IMR-90 (cell line): ENCODE measurements at regions of chr7 and their contacts with region 1.

Region 1: DNA sequence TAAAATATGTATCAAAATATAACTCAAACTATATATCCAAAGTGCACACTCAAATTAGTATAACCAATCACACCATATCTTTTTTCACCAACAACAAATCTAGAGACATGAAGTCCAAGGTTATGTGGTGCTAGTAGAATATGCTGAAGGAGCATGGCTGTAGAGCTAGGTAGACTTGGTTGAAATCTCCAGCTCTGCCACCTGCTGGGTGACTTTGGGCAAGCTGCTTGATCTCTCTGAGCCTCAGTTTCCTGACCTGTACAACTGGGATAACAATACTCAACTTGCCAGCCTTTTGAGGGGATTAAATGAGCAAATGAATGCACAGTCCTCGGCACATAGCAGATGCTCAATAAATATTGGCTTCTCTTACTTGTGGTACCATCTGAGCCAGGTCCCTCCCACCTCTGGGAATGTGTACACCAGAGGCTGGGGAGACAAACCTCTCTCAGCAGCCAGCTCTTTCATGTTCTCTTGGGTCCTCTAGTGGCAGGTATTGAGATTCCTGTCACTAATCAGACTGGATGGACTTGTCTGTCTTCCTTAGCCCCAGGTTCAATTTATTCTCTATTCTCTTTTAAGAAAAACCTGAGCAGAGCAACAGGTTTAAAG is 94.2 kb upstream of the PDE1C start:
- DNase-seq: peak; percentile 76
- ATAC-seq: peak; percentile 58
- H3K4me3 ChIP-seq: no peak overlapping the region
- H3K27ac ChIP-seq: peak overlapping the region; percentile 62
- H3K4me1 ChIP-seq: peaks cover 11% of the 10 kb centered on the region
- H3K27me3 ChIP-seq: no peaks in the 10 kb centered on the region
- CTCF ChIP-seq: peak; percentile 61
- POLR2A ChIP-seq: no peak
- RAD21 ChIP-seq: peak; percentile 71

Region 2: GRCh38 chr7:31744294-31744874 is 420.1 kb before region 1 on chr7:
- CTCF ChIA-PET with region 1: interaction called, 3 read pairs
- POLR2A ChIA-PET with region 1: no interaction called
- dilution Hi-C with region 1: no loop called
- in situ Hi-C with region 1: no loop called
- intact Hi-C with region 1: loop called (anchors 1 kb)
- DNase-seq: peak; percentile 73
- ATAC-seq: peak; percentile 91
- H3K4me3 ChIP-seq: no peak overlapping the region
- H3K27ac ChIP-seq: no peak overlapping the region
- H3K4me1 ChIP-seq: peaks cover 3% of the 10 kb centered on the region; the same call in 1 of the 2 replicates
- H3K27me3 ChIP-seq: no peaks in the 10 kb centered on the region
- CTCF ChIP-seq: peak; percentile 91
- POLR2A ChIP-seq: peak; percentile 45; the same call in 1 of the 2 replicates
- RAD21 ChIP-seq: peak; percentile 95

Region 3: GRCh38 chr7:31782411-31782991 is 382.0 kb before region 1 on chr7:
- CTCF ChIA-PET with region 1: no interaction called
- POLR2A ChIA-PET with region 1: no interaction called
- dilution Hi-C with region 1: no loop called
- in situ Hi-C with region 1: no loop called
- intact Hi-C with region 1: loop called (anchors 10 kb)
- DNase-seq: peak; percentile 77
- ATAC-seq: peak; percentile 84
- H3K4me3 ChIP-seq: no peak overlapping the region
- H3K27ac ChIP-seq: no peak overlapping the region
- H3K4me1 ChIP-seq: peaks cover 2% of the 10 kb centered on the region; the same call in 1 of the 2 replicates
- H3K27me3 ChIP-seq: no peaks in the 10 kb centered on the region
- CTCF ChIP-seq: peak; percentile 60
- POLR2A ChIP-seq: no peak
- RAD21 ChIP-seq: peak; percentile 66

Region 4: GRCh38 chr7:31957090-31957720 is 207.2 kb before region 1 on chr7:
- CTCF ChIA-PET with region 1: no interaction called
- POLR2A ChIA-PET with region 1: no interaction called
- dilution Hi-C with region 1: no loop called
- in situ Hi-C with region 1: no loop called
- intact Hi-C with region 1: loop called (anchors 5 kb)
- DNase-seq: peak; percentile 56
- ATAC-seq: peak; percentile 35; the same call in 1 of the 2 replicates
- H3K4me3 ChIP-seq: no peak overlapping the region
- H3K27ac ChIP-seq: peak overlapping the region; percentile 74; the same call in 1 of the 2 replicates
- H3K4me1 ChIP-seq: peaks cover 4% of the 10 kb centered on the region; the same call in 1 of the 2 replicates
- H3K27me3 ChIP-seq: no peaks in the 10 kb centered on the region
- CTCF ChIP-seq: no peak
- POLR2A ChIP-seq: no peak
- RAD21 ChIP-seq: no peak

Region 5: DNA sequence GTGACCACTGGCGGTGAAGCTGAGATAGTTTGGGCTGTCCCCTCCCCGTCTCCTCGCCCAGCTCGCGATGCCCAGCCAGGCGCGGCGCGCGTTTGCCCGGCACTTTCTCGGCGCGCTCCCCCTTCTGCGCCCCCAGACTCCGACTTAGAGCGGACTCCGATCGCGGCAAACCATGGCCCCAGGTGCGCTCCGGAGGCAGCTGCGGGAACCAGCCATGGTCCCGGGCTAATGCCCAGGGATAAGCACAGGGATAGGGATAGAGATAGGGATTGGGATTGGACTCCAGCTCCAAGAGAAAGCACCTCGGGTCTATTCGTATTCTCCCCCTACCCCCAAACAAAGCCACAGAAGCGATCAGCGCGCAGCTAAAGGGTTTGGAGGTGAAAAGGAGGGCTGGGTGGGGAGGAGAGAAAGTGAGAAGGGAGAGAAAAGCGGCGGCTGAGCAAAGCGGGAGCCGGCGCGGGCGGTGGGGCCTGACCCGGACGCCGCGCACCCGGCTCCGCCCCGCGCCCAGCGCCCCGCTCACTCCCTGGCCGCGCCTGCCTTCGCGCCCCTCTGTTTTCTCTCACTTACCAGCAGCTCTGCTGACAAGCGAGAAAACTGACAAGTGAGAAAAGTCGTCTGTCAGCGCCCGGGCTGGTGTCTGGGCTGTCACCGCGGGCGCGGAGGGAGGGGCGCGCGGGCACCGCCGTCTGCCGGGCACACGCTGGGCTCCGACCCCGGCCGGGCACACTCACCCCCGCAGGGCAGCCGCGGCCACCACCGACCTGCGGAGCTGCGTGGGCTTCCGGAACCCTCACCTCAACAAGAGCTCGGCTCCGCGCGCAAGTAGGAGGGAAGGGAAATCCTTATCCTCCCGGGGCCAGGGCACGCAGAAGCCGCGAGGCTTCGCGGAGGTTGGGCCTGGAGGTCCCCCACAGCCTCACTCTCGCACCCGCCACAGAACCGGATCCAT is 93.8 kb before region 1 on chr7 and contains the start of gene PDE1C:
- CTCF ChIA-PET with region 1: no interaction called
- POLR2A ChIA-PET with region 1: no interaction called
- dilution Hi-C with region 1: no loop called
- in situ Hi-C with region 1: no loop called
- intact Hi-C with region 1: loop called (anchors 1 kb)
- DNase-seq: peak; percentile 19
- ATAC-seq: peak; percentile 76
- H3K4me3 ChIP-seq: peak within 1 kb of the TSS; percentile 91
- H3K27ac ChIP-seq: peak within 1 kb of the TSS; percentile 49
- H3K4me1 ChIP-seq: peaks cover 5% of the 10 kb centered on the region; the same call in 1 of the 2 replicates
- H3K27me3 ChIP-seq: no peaks in the 10 kb centered on the region
- CTCF ChIP-seq: no peak
- POLR2A ChIP-seq: no peak
- RAD21 ChIP-seq: no peak
- total RNA-seq, gene PDE1C: 53.3 and 61.5 TPM in 2 replicates

Region 6: GRCh38 chr7:32093415-32094408 is 70.7 kb before region 1 on chr7:
- CTCF ChIA-PET with region 1: no interaction called
- POLR2A ChIA-PET with region 1: no interaction called
- dilution Hi-C with region 1: no loop called
- in situ Hi-C with region 1: no loop called
- intact Hi-C with region 1: loop called (anchors 1 kb)
- DNase-seq: peak; percentile 82
- ATAC-seq: peak; percentile 87
- H3K4me3 ChIP-seq: no peak overlapping the region
- H3K27ac ChIP-seq: peak overlapping the region; percentile 88
- H3K4me1 ChIP-seq: peaks cover 15% of the 10 kb centered on the region
- H3K27me3 ChIP-seq: no peaks in the 10 kb centered on the region
- CTCF ChIP-seq: no peak
- POLR2A ChIP-seq: no peak
- RAD21 ChIP-seq: no peak